AG04450 (cell line): ENCODE measurements at regions of chr4 and their contacts with region 1.

Region 1: GRCh38 chr4:118224239-118224829 is 128.5 kb downstream of the PRSS12 start:
- DNase-seq: peak; percentile 18
- H3K4me3 ChIP-seq: no peak overlapping the region
- H3K27ac ChIP-seq: no peak overlapping the region
- H3K27me3 ChIP-seq: no peaks in the 10 kb centered on the region
- CTCF ChIP-seq: peak; percentile 70

Region 2: GRCh38 chr4:118034053-118034785 is 190.1 kb before region 1 on chr4 and contains the start of gene NDST3:
- CTCF ChIA-PET with region 1: interaction called, 16 read pairs
- POLR2A ChIA-PET with region 1: interaction called, 3 read pairs
- DNase-seq: no peak
- H3K4me3 ChIP-seq: peak within 1 kb of the TSS; percentile 60
- H3K27ac ChIP-seq: no peak within 1 kb of the TSS
- H3K27me3 ChIP-seq: peaks cover 5% of the 10 kb centered on the region
- CTCF ChIP-seq: 0 out of 2 replicates have a peak, but pooled peaks have one; percentile 15
- polyA plus RNA-seq, gene NDST3: 0.02 and 0.04 TPM in 2 replicates

Region 3: DNA sequence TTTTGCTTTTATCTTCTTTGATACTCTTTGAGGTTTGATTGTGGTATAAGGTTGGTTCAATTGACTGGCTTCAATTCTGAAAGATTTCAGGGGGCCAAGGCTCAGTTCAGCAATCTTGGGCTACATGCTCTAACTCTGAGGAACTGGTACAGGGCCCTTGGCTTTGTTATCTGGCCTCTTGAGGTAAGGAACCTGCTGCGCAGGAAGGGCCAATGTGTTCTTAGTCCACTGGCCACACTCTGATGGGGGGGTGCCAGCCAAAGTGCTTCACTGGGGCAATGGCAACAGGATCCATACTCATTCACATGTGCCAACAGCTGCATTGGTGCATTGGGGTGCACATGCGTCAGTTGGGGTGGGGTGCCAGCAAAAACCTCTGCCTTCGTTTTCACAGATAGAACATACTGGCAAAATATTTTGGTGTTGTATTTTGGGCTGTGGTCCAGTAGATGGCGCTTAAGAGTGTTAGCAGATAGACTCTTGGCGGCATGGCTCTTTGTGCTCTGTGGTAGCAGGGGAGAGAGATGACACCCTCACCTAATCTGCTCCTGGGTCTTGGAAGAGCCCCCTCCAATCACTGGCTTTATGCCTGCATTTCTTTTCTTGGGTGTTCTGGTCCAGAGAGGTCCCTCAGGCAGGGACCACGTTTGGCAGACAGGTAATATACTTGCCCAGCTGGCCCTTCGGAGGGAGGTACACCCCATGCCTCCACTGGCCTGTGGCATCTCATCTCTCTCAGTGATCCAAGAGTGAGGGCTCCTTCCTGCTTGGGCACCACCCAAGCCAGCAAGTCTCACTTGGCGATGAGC is 147.2 kb before region 1 on chr4:
- CTCF ChIA-PET with region 1: interaction called, 68 read pairs
- POLR2A ChIA-PET with region 1: no interaction called
- DNase-seq: no peak
- H3K4me3 ChIP-seq: no peak overlapping the region
- H3K27ac ChIP-seq: no peak overlapping the region
- H3K27me3 ChIP-seq: no peaks in the 10 kb centered on the region
- CTCF ChIP-seq: peak; percentile 65

Region 4: GRCh38 chr4:118206627-118207026 is 17.7 kb before region 1 on chr4:
- CTCF ChIA-PET with region 1: interaction called, 11 read pairs
- POLR2A ChIA-PET with region 1: no interaction called
- DNase-seq: peak; percentile 6
- H3K4me3 ChIP-seq: no peak overlapping the region
- H3K27ac ChIP-seq: no peak overlapping the region
- H3K27me3 ChIP-seq: no peaks in the 10 kb centered on the region
- CTCF ChIP-seq: no peak

Region 5: DNA sequence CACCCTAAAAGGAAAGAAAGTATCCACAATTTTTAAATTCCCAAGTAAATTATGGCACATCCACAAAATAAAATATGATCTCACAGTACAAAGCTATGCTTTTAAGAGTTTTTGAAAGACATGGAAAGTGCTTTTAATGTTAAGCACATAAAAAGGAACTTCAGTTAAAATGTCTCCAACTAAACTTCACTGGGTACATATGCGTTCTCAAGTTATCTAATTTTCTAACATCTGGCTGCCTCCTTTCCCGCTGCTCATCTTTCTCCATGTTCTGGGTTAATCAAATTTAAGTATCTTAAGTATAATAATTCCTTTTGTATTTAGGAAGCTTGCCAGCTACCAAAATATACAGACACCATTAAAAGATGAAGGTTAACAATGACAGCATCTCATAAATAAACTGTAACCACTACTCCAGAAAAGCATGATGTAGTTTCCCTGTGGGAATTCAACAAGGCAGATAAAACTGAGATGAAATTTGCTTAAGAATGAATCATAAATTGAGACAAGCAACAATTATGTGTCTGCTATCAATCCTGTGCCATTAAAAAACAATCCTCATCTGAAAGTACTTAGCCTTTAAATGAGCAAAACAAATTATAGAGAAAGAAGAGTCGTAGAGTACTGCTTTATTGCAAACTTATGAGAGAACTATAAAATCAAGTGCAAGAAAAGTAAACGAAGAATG is 103.4 kb after region 1 on chr4:
- CTCF ChIA-PET with region 1: no interaction called
- POLR2A ChIA-PET with region 1: no interaction called
- DNase-seq: no peak
- H3K4me3 ChIP-seq: no peak overlapping the region
- H3K27ac ChIP-seq: no peak overlapping the region
- H3K27me3 ChIP-seq: no peaks in the 10 kb centered on the region
- CTCF ChIP-seq: no peak